K562 (cell line): ENCODE measurements at regions of chr10 and their contacts with region 1.

Region 1: GRCh38 chr10:71708301-71708703 is 11.3 kb downstream of the C10orf105 start:
- DNase-seq: peak; percentile 80 to 83 (median 82)
- ATAC-seq: peak; percentile 90
- H3K4me3 ChIP-seq: no peak overlapping the region
- H3K27ac ChIP-seq: no peak overlapping the region
- H3K4me1 ChIP-seq: peaks cover 6 to 57% of the 10 kb centered on the region in 2 experiments
- H3K27me3 ChIP-seq: no peaks in the 10 kb centered on the region
- CTCF ChIP-seq: peak; percentile 93 to 99 (median 94)
- EP300 ChIP-seq: no peak
- POLR2A ChIP-seq: no peak
- RAD21 ChIP-seq: peak; percentile 81 to 97

Region 2: GRCh38 chr10:71314028-71314693 is 394.1 kb before region 1 on chr10:
- CTCF ChIA-PET with region 1: interaction called, 6 read pairs
- POLR2A ChIA-PET with region 1: no interaction called
- in situ Hi-C with region 1: loop called (anchors 5 kb)
- intact Hi-C with region 1: loop called (anchors 2 kb)
- DNase-seq: peak; percentile 79 to 91 (median 90)
- ATAC-seq: peak; percentile 73
- H3K4me3 ChIP-seq: no peak overlapping the region
- H3K27ac ChIP-seq: no peak overlapping the region
- H3K4me1 ChIP-seq: peaks cover 8 to 9% of the 10 kb centered on the region in 2 experiments; a peak in 4 of 5 replicates
- H3K27me3 ChIP-seq: peaks cover 0 to 10% of the 10 kb centered on the region in 2 experiments; a peak in 2 of 5 replicates
- CTCF ChIP-seq: peak; percentile 68 to 82 (median 76)
- EP300 ChIP-seq: no peak
- POLR2A ChIP-seq: no peak
- RAD21 ChIP-seq: peak; percentile 64 to 78

Region 3: DNA sequence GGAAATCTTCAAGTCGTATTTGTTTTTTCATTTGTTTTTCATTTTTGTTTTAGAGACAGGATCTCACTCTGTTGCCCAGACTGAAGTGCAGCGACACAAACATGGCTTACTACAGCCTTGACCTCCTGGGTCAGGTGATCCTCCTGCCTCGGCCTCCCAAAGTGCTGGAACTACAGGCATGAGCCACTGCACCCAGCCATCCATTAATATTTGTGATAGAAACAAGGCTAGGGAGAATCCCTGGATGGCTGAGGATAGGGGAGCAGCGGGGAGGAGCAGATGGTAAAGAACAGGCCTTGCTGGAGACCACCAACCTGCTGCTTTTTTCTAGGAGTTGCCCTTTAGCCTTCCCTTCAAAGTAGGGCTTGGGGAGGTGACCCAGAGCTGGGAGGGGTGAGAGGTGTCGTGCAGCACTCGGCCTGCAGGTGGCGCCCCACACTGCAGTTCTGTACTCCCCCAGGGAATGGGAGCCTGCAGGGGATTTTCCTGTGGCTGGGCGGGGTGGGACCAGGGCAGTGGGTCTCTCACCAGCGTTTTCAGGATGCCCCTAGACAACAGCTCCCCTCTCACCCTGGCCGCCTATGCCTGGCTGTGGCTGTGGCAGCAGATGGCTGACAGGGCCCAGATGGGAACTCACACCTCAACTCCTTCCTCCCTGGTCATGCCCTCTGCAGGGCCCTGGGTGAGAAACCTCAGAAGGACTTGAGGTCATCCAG is 324.2 kb before region 1 on chr10:
- CTCF ChIA-PET with region 1: interaction called, 4 read pairs
- POLR2A ChIA-PET with region 1: no interaction called
- in situ Hi-C with region 1: loop called (anchors 10 kb)
- intact Hi-C with region 1: no loop called
- DNase-seq: peak; percentile 86 to 92 (median 90)
- ATAC-seq: peak; percentile 98
- H3K4me3 ChIP-seq: no peak overlapping the region
- H3K27ac ChIP-seq: no peak overlapping the region
- H3K4me1 ChIP-seq: peaks cover 3 to 9% of the 10 kb centered on the region in 2 experiments; a peak in 3 of 5 replicates
- H3K27me3 ChIP-seq: peaks cover 5 to 10% of the 10 kb centered on the region in 2 experiments
- CTCF ChIP-seq: peak; percentile 95 to 98 (median 95)
- EP300 ChIP-seq: no peak
- POLR2A ChIP-seq: no peak
- RAD21 ChIP-seq: peak; percentile 82 to 92

Region 4: DNA sequence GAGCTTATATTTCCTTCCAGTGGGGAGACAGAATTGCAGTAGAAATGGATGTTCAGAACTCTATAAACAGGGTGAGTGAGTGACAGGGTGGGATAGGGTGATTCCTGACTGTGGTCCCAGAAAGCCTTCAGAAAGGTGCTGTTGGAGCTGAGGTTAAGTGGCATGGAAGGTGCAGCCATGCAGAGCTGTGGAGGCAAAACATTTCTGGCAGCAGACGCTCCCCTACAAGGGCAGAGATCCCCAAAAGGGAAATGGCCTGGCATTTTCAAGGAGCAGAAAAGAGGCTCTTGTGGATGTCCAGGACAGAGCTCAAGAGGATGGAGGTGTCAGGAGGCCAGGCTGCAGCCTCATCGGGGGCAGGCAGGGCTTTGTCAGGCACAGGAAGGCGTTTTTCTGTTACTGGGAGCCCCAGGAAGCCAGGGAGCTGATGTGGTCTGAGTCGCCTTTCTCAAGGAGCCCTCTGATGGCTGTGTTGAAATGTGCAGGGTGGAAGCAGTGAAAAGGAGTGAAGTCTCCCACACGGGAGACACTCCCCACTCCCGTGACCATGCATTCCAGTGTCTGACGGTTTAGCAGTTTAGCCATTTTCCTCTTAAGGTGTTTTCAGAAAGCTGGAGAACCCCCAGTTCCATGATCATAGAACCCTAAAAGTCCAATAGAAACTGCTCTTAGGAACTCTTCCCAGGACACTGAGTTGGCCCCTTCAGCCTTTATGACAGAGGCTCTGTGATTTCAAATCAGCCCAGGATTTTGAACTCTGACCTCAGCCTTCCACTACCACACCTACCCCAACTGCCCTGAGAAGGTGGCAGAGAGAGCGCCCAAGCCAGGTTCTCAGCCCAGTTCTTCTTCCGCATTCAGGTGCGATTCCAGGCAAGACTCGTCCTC is 85.0 kb before region 1 on chr10:
- CTCF ChIA-PET with region 1: no interaction called
- POLR2A ChIA-PET with region 1: interaction called, 3 read pairs
- in situ Hi-C with region 1: no loop called
- intact Hi-C with region 1: loop called (anchors 5 kb)
- DNase-seq: peak; percentile 81 to 84 (median 82)
- ATAC-seq: peak; percentile 93
- H3K4me3 ChIP-seq: no peak overlapping the region
- H3K27ac ChIP-seq: no peak overlapping the region
- H3K4me1 ChIP-seq: peaks cover 23 to 47% of the 10 kb centered on the region in 2 experiments; a peak in 4 of 5 replicates
- H3K27me3 ChIP-seq: no peaks in the 10 kb centered on the region
- CTCF ChIP-seq: peak; percentile 50 to 61 (median 51)
- EP300 ChIP-seq: no peak
- POLR2A ChIP-seq: no peak
- RAD21 ChIP-seq: peak; percentile 34 to 70; a peak in 3 of 4 replicates

Region 5: DNA sequence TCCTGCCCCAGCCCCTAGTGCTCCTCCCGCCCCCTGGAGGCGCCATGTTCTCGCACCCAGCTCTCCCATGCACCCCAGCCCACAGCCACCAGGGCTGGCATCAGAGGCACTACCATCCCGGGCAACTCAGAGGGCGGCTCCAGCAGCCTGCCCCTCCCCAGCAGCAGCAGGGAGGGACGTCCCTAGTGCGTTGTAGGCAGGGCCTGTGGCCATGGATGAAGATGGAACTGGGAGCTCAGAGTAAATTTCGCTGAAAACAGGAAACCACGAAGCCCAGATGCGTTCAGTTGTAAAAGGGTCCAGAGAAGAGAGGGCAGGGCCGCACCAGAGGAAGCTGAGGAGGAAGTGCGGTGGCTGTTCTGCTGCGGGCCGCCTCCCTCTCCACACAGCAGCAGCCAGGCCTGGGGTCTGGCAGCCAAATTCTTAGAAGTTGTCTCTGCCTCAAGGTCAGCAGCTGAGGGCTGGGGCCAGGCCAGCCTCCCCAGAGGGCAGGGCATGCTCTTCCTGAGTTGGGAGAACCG is 40.4 kb after region 1 on chr10:
- CTCF ChIA-PET with region 1: no interaction called
- POLR2A ChIA-PET with region 1: interaction called, 3 read pairs
- in situ Hi-C with region 1: no loop called
- intact Hi-C with region 1: loop called (anchors 1 kb)
- DNase-seq: peak; percentile 33 to 55 (median 42)
- ATAC-seq: no peak; the same call in 2 of the 3 replicates
- H3K4me3 ChIP-seq: no peak overlapping the region
- H3K27ac ChIP-seq: peak overlapping the region; percentile 64; the same call in 1 of the 3 replicates
- H3K4me1 ChIP-seq: peaks cover 68 to 82% of the 10 kb centered on the region in 2 experiments
- H3K27me3 ChIP-seq: no peaks in the 10 kb centered on the region
- CTCF ChIP-seq: no peak
- EP300 ChIP-seq: peak; percentile 16; the same call in 1 of the 2 replicates
- POLR2A ChIP-seq: no peak
- RAD21 ChIP-seq: peak in 1 of 2 experiments; percentile 19; a peak in 1 of 4 replicates